T-cell (primary cell): ENCODE measurements at regions of chr14 and their contacts with region 1.

Region 1: GRCh38 chr14:75188520-75189268 is 12.3 kb upstream of the TMED10 start:
- DNase-seq: peak in 7 of 35 experiments; percentile 1 to 39 (median 4)
- ATAC-seq: no peak
- H3K4me3 ChIP-seq: no peak overlapping the region
- H3K4me3 Mint-ChIP-seq: no peak overlapping the region
- H3K27ac ChIP-seq: no peak overlapping the region
- H3K27ac Mint-ChIP-seq: no peak overlapping the region
- H3K4me1 ChIP-seq: no peaks in the 10 kb centered on the region
- H3K4me1 Mint-ChIP-seq: peaks cover 0 to 6% (median 0%) of the 10 kb centered on the region in 3 donors
- H3K27me3 ChIP-seq: peaks cover 0 to 6% of the 10 kb centered on the region in 2 experiments
- H3K27me3 Mint-ChIP-seq: peaks cover 4 to 11% of the 10 kb centered on the region in 2 donors

Region 2: DNA sequence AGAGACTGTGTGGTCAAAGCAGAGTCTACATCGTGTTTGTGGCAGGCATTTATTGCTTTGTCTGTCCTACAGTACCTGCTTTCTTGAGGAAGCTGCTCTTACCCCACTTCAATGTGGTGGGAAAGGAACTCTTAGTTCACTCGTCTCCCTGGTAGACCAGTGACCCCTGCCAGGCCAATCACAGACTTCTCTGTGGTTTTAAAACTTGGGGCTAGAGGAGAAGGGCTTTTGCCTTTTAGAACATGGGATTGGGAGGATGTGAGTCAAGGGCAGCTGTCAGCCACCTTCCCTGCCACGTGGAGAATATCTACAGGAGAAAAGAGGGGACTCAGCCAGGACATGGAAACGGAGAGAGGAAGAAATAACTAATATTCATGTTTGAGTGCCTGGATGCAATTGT is 24.5 kb after region 1 on chr14:
- CTCF ChIA-PET with region 1: interaction called in 1 of 2 experiments, 10 read pairs
- POLR2A ChIA-PET with region 1: interaction called in 1 of 2 experiments, 4 read pairs
- DNase-seq: no peak
- ATAC-seq: no peak
- H3K4me3 ChIP-seq: no peak overlapping the region
- H3K4me3 Mint-ChIP-seq: no peak overlapping the region
- H3K27ac ChIP-seq: no peak overlapping the region
- H3K27ac Mint-ChIP-seq: no peak overlapping the region
- H3K4me1 ChIP-seq: peaks cover 11 to 27% of the 10 kb centered on the region in 2 experiments
- H3K4me1 Mint-ChIP-seq: peaks cover 22 to 29% (median 26%) of the 10 kb centered on the region in 3 donors
- H3K27me3 ChIP-seq: no peaks in the 10 kb centered on the region
- H3K27me3 Mint-ChIP-seq: peaks cover 0 to 2% of the 10 kb centered on the region in 2 donors